ENCODE measurements at regions of chr11 and their contacts with region 1.

Region 1: GRCh38 chr11:65274735-65275682 is 13.2 kb downstream of the POLA2 start:
- DNase-seq: peak; percentile 89
- H3K4me3 ChIP-seq: no peak overlapping the region
- H3K27me3 ChIP-seq: no peaks in the 10 kb centered on the region
- CTCF ChIP-seq: peak; percentile 74

Region 2: GRCh38 chr11:64916775-64917662 is 358.0 kb before region 1 on chr11 and contains the start of gene ATG2A:
- CTCF ChIA-PET with region 1: no interaction called
- POLR2A ChIA-PET with region 1: no interaction called
- DNase-seq: peak; percentile 100
- H3K4me3 ChIP-seq: peak within 1 kb of the TSS; percentile 69
- H3K27me3 ChIP-seq: no peaks in the 10 kb centered on the region
- CTCF ChIP-seq: no peak
- polyA plus RNA-seq, gene ATG2A: 3.7 and 7.0 TPM in 2 replicates

Region 3: DNA sequence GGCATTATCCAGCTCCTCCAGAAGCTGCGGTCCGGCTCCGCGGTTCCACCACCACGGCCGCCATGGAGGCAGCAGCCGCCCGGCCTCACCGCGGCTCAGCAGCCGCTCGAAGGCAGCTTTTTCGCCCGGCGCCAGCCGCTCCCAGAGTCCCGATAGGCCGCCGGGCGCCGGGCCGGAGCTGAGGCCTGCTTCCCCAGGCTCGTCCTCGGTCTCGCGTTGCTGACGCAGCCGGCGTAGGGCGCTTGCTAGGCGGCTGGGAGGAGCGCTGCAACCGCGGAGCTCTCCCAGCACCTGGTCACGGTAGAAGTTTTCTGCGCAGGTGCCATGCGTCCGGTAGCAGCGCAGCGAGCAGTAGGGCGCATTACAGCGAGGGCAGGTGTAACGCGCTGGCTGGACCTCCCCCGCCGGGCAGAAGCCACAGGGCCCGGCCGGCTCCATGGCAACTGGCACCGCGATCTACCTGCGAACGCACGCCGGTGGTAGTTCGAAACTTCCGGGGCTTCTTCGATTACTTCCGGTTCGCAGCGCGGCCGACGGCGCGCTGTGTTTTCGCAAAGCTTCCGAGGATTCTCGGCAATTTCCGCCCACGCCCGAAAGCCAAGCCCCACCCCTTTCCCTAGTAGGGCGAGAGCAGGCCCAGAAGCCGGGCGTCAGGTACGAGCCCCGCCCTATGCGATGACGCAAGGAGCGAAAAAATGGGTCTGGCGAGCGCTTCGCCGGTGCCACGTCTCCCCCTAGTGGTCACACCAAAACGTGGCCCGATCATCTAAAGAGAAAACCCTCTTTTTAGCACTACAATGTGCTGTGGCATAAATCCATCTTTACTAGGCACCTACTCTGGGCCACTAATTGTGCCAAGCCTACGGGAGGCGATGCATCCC is 157.6 kb before region 1 on chr11 and contains the start of gene ZNHIT2:
- CTCF ChIA-PET with region 1: no interaction called
- POLR2A ChIA-PET with region 1: interaction called, 13 read pairs
- DNase-seq: peak; percentile 94
- H3K4me3 ChIP-seq: peak within 1 kb of the TSS; percentile 79
- H3K27me3 ChIP-seq: no peaks in the 10 kb centered on the region
- CTCF ChIP-seq: peak; percentile 90
- polyA plus RNA-seq, gene ZNHIT2: 3.6 and 4.6 TPM in 2 replicates

Region 4: DNA sequence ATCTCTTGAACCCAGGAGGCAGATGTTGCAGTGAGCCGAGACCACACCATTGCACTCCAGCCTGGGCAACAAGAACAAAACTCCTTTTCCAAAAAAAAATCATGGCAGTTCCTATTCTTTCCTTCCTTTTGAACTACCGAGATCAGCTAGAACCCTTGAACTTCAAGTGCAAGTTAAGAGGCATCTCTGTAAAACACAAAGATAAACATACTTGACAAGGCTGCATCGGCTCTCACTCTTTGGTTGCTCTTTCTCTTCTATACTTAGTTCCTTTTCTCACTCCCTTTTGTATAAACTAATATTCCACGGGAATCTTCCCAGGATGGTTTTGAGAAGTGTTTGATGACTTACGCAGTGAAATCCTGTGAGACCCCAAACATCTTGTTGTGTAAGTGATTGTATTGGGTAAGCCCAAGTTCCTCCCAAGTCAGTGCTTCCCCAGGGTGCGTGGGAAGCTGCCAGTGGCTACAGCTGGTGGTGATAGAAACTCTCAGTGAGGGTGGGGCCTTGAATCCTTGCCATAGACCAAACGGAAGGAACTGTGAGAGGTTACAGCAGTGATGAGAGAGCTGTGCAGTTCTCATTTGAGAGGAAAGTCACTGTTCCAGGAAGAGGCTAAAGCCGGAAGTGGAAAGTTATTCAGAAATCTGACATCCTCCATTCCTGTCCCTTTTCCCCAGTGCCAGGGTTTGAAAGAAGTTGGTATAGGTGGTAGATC is 15.6 kb after region 1 on chr11:
- CTCF ChIA-PET with region 1: interaction called, 8 read pairs
- POLR2A ChIA-PET with region 1: interaction called, 11 read pairs
- DNase-seq: peak; percentile 98
- H3K4me3 ChIP-seq: no peak overlapping the region
- H3K27me3 ChIP-seq: no peaks in the 10 kb centered on the region
- CTCF ChIP-seq: no peak

Region 5: DNA sequence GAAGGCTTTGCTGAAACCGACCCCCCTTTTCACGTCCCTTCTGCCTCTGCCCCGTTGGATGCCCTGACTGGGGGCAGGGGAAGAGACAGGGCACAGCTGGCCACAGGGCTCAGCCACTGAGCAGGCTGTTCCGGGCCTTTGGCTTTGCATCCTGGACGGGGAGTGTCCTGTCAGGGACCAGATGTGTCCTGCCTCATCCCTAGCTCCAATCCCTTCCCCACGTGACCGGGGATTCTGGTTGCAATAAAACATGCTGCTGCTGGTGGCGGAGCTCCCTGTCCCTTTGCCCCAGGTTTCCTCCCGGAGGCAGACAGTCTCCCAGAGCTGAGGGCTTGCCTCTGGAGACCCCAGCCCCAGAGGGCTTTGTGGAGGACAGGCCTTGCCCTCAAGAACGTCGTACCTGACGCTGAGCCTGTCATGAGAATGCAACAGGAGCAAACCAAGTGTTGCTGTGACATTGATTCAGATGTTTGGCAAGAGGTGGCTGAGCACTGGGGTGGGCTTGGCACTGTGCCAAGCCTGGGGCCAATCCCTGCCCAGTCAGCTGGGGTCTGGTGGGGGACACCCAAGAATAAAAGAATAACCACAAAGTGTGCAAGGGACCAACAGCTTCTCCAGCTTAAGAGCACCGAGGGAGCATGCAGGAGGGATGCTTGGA is 46.9 kb after region 1 on chr11:
- CTCF ChIA-PET with region 1: interaction called, 266 read pairs
- POLR2A ChIA-PET with region 1: interaction called, 40 read pairs
- DNase-seq: no peak
- H3K4me3 ChIP-seq: no peak overlapping the region
- H3K27me3 ChIP-seq: no peaks in the 10 kb centered on the region
- CTCF ChIP-seq: no peak

Region 6: GRCh38 chr11:65377777-65378176 is 102.8 kb after region 1 on chr11:
- CTCF ChIA-PET with region 1: no interaction called
- POLR2A ChIA-PET with region 1: no interaction called
- DNase-seq: no peak
- H3K4me3 ChIP-seq: no peak overlapping the region
- H3K27me3 ChIP-seq: no peaks in the 10 kb centered on the region
- CTCF ChIP-seq: no peak

Region 7: DNA sequence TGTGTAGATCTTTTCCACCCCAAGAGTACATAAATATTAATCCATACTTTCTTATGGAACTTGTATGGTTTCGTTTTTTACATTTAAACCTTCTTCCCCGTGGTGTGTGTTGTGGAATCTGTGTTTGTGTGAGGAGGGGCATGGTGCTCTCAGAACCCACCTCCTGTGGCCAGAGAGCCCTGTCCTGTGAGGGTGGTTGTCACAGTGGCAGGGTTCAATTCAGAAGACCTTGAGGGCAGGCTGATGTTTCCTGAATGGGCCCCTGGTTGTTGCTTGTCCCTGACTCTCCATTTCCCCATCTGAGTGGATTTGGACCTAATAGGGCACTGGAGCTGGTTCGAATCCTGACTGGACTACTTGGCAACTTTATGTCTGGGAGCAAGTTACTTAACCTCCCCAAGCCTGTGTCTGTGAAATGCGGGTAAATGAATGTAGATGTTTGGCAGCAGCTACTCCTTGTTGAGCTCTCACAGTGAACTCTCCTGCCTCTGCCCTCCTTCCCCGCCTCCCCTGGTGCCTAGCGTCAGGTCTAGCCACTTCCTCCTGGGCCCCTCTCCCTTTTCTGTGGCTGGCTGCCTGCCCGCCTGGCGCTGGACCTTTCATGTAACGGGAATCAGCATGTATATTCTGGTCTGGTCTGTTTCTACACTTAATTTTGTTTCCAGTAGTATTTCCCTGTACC is 154.9 kb after region 1 on chr11:
- CTCF ChIA-PET with region 1: no interaction called
- POLR2A ChIA-PET with region 1: interaction called, 13 read pairs
- DNase-seq: no peak
- H3K4me3 ChIP-seq: peak overlapping the region; percentile 72
- H3K27me3 ChIP-seq: no peaks in the 10 kb centered on the region
- CTCF ChIP-seq: no peak